Natural killer cell (primary cell): ENCODE measurements at regions of chr2 and their contacts with region 1.

Region 1: GRCh38 chr2:9703085-9703641 is 72.4 kb upstream of the YWHAQ start:
- DNase-seq: peak; percentile 88 to 96
- ATAC-seq: peak; percentile 84 to 92 (median 90)
- H3K4me3 ChIP-seq: no peak overlapping the region
- H3K4me3 Mint-ChIP-seq: peak overlapping the region; percentile 77
- H3K27ac ChIP-seq: peak overlapping the region; percentile 96
- H3K27ac Mint-ChIP-seq: peak overlapping the region; percentile 95 to 97
- H3K4me1 ChIP-seq: peaks cover 47% of the 10 kb centered on the region
- H3K4me1 Mint-ChIP-seq: peaks cover 64 to 80% of the 10 kb centered on the region in 2 donors
- H3K27me3 ChIP-seq: no peaks in the 10 kb centered on the region
- H3K27me3 Mint-ChIP-seq: no peaks in the 10 kb centered on the region
- CTCF ChIP-seq: no peak

Region 2: GRCh38 chr2:9555297-9556141 is 147.6 kb before region 1 on chr2 and contains the start of gene ADAM17:
- intact Hi-C with region 1: loop called (anchors 1 kb)
- DNase-seq: peak; percentile 88 to 92
- ATAC-seq: peak; percentile 88 to 97 (median 95)
- H3K4me3 ChIP-seq: peak within 1 kb of the TSS; percentile 69
- H3K4me3 Mint-ChIP-seq: peak within 1 kb of the TSS; percentile 98
- H3K27ac ChIP-seq: peak within 1 kb of the TSS; percentile 100
- H3K27ac Mint-ChIP-seq: peak within 1 kb of the TSS; percentile 92 to 97
- H3K4me1 ChIP-seq: peaks cover 18% of the 10 kb centered on the region
- H3K4me1 Mint-ChIP-seq: peaks cover 52 to 59% of the 10 kb centered on the region in 2 donors
- H3K27me3 ChIP-seq: no peaks in the 10 kb centered on the region
- H3K27me3 Mint-ChIP-seq: no peaks in the 10 kb centered on the region
- CTCF ChIP-seq: peak; percentile 27
- total RNA-seq, gene ADAM17: 44.0 to 53.8 (median 46.8) TPM

Region 3: GRCh38 chr2:9630749-9631483 is 72.2 kb before region 1 on chr2 and contains the start of gene YWHAQ:
- intact Hi-C with region 1: loop called (anchors 1 kb)
- DNase-seq: peak; percentile 99
- ATAC-seq: peak; percentile 85 to 96 (median 87)
- H3K4me3 ChIP-seq: peak within 1 kb of the TSS; percentile 68
- H3K4me3 Mint-ChIP-seq: peak within 1 kb of the TSS; percentile 96
- H3K27ac ChIP-seq: peak within 1 kb of the TSS; percentile 94
- H3K27ac Mint-ChIP-seq: peak within 1 kb of the TSS; percentile 94 to 97
- H3K4me1 ChIP-seq: peaks cover 32% of the 10 kb centered on the region
- H3K4me1 Mint-ChIP-seq: peaks cover 54 to 59% of the 10 kb centered on the region in 2 donors
- H3K27me3 ChIP-seq: no peaks in the 10 kb centered on the region
- H3K27me3 Mint-ChIP-seq: no peaks in the 10 kb centered on the region
- CTCF ChIP-seq: no peak
- total RNA-seq, gene YWHAQ: 227 to 240 (median 238) TPM

Region 4: GRCh38 chr2:9739531-9739964 is 36.4 kb after region 1 on chr2:
- intact Hi-C with region 1: loop called (anchors 2 kb)
- DNase-seq: peak; percentile 40 to 72
- ATAC-seq: peak; percentile 57 to 71 (median 60)
- H3K4me3 ChIP-seq: peak overlapping the region; percentile 2
- H3K4me3 Mint-ChIP-seq: peak overlapping the region; percentile 86
- H3K27ac ChIP-seq: peak overlapping the region; percentile 62
- H3K27ac Mint-ChIP-seq: peak overlapping the region; percentile 79 to 87
- H3K4me1 ChIP-seq: peaks cover 41% of the 10 kb centered on the region
- H3K4me1 Mint-ChIP-seq: peaks cover 41 to 65% of the 10 kb centered on the region in 2 donors
- H3K27me3 ChIP-seq: no peaks in the 10 kb centered on the region
- H3K27me3 Mint-ChIP-seq: no peaks in the 10 kb centered on the region
- CTCF ChIP-seq: no peak

Region 5: GRCh38 chr2:10448208-10448645 is 745.1 kb after region 1 on chr2 and contains the start of gene ODC1:
- intact Hi-C with region 1: loop called (anchors 5 kb)
- DNase-seq: peak; percentile 95 to 97
- ATAC-seq: peak; percentile 80 to 93 (median 82)
- H3K4me3 ChIP-seq: peak within 1 kb of the TSS; percentile 58
- H3K4me3 Mint-ChIP-seq: peak within 1 kb of the TSS; percentile 75
- H3K27ac ChIP-seq: peak within 1 kb of the TSS; percentile 93
- H3K27ac Mint-ChIP-seq: peak within 1 kb of the TSS; percentile 68 to 85
- H3K4me1 ChIP-seq: peaks cover 22% of the 10 kb centered on the region
- H3K4me1 Mint-ChIP-seq: peaks cover 6 to 20% of the 10 kb centered on the region in 2 donors
- H3K27me3 ChIP-seq: no peaks in the 10 kb centered on the region
- H3K27me3 Mint-ChIP-seq: no peaks in the 10 kb centered on the region
- CTCF ChIP-seq: no peak
- total RNA-seq, gene ODC1: 38.7 to 85.4 (median 43.8) TPM